B cell (primary cell): ENCODE measurements at regions of chr21 and their contacts with region 1.

Region 1: DNA sequence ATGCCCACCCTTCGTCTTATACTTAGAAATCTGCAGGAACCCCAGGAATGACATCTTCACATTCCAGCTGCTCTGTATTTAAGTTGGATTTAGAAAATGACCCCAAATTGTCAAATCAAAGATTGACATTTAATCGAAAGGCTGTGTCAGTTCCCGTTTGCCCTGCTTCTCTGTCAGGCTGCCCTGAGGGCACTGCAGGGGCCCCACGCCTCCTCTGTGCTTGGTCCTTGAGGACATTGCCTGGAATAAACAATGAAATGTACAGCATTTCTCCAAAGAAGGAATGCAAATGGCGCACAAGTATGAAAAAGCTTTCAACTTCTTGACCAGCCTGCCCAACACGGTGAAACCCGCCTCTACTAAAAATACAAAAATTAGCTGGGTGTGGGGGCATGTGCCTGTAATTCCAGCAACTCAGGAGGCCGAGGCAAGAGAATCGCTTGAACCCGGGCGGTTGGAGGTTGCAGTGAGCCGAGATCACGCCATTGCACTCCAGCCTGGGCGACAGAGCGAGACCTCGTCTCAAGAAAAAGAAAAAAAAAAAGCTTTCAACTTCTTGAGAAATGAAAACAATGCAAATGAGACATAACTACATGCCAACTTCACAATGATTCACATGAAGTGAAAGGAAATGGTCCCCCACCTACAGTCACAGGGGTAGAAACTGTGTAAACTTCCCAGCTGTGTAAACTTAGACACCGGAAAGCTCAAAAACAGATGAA is 3.0 kb downstream of the TMPRSS3 start:
- DNase-seq: peak; percentile 60
- ATAC-seq: peak; percentile 78
- H3K4me3 ChIP-seq: no peak overlapping the region
- H3K4me3 Mint-ChIP-seq: peak overlapping the region; percentile 51
- H3K27ac ChIP-seq: no peak overlapping the region
- H3K27ac Mint-ChIP-seq: peak overlapping the region; percentile 43
- H3K4me1 ChIP-seq: peaks cover 9 to 21% of the 10 kb centered on the region in 2 donors
- H3K4me1 Mint-ChIP-seq: peaks cover 40% of the 10 kb centered on the region
- H3K27me3 ChIP-seq: peaks cover 0 to 7% (median 0%) of the 10 kb centered on the region in 4 experiments
- H3K27me3 Mint-ChIP-seq: peaks cover 18% of the 10 kb centered on the region
- CTCF ChIP-seq: no peak

Region 2: DNA sequence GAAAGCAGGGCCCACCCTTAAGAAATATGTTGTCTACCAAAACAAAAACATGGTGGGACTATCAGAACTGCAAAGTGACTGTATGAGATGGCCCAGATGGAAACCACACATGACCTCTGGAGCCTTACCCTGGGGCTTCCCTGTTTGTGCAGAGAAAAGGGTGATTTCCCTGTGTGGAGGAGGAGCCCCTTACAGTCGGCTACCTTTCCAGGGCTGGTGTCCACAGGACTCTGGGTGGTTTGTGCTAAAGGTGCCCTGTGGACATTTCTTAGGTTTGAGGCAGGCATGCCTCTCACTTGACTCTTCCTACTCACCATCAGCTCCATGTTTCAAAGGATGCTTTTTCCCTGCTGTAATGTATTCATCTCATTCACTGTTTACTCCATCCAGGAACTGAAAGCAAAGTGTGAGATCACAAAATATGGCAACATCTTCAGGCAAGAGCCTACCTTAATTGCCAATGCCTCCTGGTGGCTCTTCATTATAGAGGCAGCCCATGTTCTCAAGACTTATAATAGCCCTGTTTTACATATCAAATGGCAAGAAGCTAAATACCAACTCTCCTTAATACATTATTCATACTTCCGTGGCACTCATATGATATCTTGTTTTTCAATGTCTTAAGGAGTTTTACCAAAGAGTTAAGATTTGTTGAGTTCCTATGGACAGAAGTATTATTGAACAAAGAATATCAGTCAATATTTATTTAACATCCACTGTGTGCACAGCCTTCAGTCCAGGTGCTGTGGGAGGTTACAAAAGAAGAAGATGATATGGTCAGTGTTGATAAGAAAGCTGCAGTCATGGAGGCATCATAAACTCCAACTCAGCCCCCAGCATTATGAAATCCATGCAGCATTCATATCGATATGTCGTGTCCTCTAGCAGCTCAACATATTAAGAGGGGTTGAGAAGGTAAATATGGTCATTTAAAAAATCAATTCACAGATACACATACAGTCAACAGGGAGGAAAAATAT is 62.2 kb before region 1 on chr21:
- CTCF ChIA-PET with region 1: no interaction called
- POLR2A ChIA-PET with region 1: no interaction called
- intact Hi-C with region 1: no loop called
- DNase-seq: no peak
- ATAC-seq: no peak
- H3K4me3 ChIP-seq: no peak overlapping the region
- H3K4me3 Mint-ChIP-seq: no peak overlapping the region
- H3K27ac ChIP-seq: no peak overlapping the region
- H3K27ac Mint-ChIP-seq: no peak overlapping the region
- H3K4me1 ChIP-seq: no peaks in the 10 kb centered on the region
- H3K4me1 Mint-ChIP-seq: no peaks in the 10 kb centered on the region
- H3K27me3 ChIP-seq: peaks cover 0 to 17% (median 6%) of the 10 kb centered on the region in 4 experiments
- H3K27me3 Mint-ChIP-seq: peaks cover 21% of the 10 kb centered on the region
- CTCF ChIP-seq: no peak

Region 3: GRCh38 chr21:42414928-42415769 is 22.3 kb after region 1 on chr21:
- CTCF ChIA-PET with region 1: no interaction called
- POLR2A ChIA-PET with region 1: no interaction called
- intact Hi-C with region 1: loop called (anchors 2 kb)
- DNase-seq: peak; percentile 87
- ATAC-seq: peak; percentile 86
- H3K4me3 ChIP-seq: peak overlapping the region in 2 of 5 experiments; percentile 25 to 27
- H3K4me3 Mint-ChIP-seq: peak overlapping the region; percentile 77
- H3K27ac ChIP-seq: no peak overlapping the region
- H3K27ac Mint-ChIP-seq: peak overlapping the region; percentile 91
- H3K4me1 ChIP-seq: peaks cover 6 to 16% of the 10 kb centered on the region in 2 donors
- H3K4me1 Mint-ChIP-seq: peaks cover 32% of the 10 kb centered on the region
- H3K27me3 ChIP-seq: peaks cover 0 to 3% (median 1%) of the 10 kb centered on the region in 4 experiments
- H3K27me3 Mint-ChIP-seq: peaks cover 11% of the 10 kb centered on the region
- CTCF ChIP-seq: no peak

Region 4: GRCh38 chr21:42467140-42467983 is 74.5 kb after region 1 on chr21:
- CTCF ChIA-PET with region 1: no interaction called
- POLR2A ChIA-PET with region 1: no interaction called
- intact Hi-C with region 1: loop called (anchors 5 kb)
- DNase-seq: peak; percentile 50
- ATAC-seq: no peak
- H3K4me3 ChIP-seq: no peak overlapping the region
- H3K4me3 Mint-ChIP-seq: no peak overlapping the region
- H3K27ac ChIP-seq: no peak overlapping the region
- H3K27ac Mint-ChIP-seq: peak overlapping the region; percentile 23
- H3K4me1 ChIP-seq: peaks cover 47 to 67% of the 10 kb centered on the region in 2 donors
- H3K4me1 Mint-ChIP-seq: peaks cover 53% of the 10 kb centered on the region
- H3K27me3 ChIP-seq: peaks cover 0 to 12% (median 0%) of the 10 kb centered on the region in 4 experiments
- H3K27me3 Mint-ChIP-seq: peaks cover 9% of the 10 kb centered on the region
- CTCF ChIP-seq: no peak